CD8-positive, alpha-beta memory T cell (primary cell): ENCODE measurements at regions of chr12 and their contacts with region 1.

Region 1: DNA sequence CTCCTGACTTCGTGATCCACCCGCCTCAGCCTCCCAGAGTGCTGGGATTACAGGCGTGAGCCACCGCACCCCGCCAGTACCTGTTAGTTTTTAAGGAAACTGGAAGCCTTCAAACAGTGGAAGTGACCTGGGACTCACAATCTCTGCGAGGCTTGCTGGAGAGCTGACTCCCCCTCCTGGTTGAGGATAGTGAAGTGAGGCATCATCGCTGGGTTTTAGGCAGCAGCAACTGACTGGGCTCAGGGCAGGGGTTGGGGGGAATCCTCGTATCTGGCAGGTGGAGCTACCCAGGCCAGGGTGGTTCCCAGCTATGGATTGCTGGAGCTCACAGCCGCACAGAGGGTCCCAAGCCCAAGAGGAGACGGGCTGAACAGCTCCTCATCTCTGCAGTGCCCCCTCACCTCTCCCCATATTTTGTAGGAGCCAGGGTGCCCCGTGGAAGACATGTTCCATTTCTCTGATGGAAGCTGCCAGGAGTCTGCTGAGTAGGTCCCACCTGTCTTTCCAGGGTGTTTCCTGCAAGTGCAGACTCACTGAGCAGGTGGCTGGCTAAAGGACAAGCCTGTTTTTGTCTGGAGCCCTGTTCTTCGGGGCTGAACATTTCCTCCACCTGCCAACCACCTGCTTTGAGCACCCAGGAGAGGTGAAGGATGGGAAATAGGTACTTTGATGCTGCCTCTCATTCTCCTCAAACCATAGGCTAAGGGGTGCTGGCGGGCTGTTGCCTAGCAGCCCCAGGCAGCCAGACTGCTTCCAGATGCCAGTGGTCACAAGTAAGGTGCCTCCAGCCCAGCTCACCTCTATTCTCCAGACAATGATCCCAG is 3.1 kb downstream of the AVIL start:
- DNase-seq: no peak
- H3K4me3 ChIP-seq: no peak overlapping the region
- H3K4me3 Mint-ChIP-seq: no peak overlapping the region
- H3K27ac ChIP-seq: no peak overlapping the region
- H3K27ac Mint-ChIP-seq: peak overlapping the region in 1 of 8 donors; percentile 17
- H3K4me1 ChIP-seq: no peaks in the 10 kb centered on the region
- H3K4me1 Mint-ChIP-seq: peaks cover 3 to 8% (median 4%) of the 10 kb centered on the region in 3 donors
- H3K27me3 ChIP-seq: no peaks in the 10 kb centered on the region
- H3K27me3 Mint-ChIP-seq: no peaks in the 10 kb centered on the region

Region 2: DNA sequence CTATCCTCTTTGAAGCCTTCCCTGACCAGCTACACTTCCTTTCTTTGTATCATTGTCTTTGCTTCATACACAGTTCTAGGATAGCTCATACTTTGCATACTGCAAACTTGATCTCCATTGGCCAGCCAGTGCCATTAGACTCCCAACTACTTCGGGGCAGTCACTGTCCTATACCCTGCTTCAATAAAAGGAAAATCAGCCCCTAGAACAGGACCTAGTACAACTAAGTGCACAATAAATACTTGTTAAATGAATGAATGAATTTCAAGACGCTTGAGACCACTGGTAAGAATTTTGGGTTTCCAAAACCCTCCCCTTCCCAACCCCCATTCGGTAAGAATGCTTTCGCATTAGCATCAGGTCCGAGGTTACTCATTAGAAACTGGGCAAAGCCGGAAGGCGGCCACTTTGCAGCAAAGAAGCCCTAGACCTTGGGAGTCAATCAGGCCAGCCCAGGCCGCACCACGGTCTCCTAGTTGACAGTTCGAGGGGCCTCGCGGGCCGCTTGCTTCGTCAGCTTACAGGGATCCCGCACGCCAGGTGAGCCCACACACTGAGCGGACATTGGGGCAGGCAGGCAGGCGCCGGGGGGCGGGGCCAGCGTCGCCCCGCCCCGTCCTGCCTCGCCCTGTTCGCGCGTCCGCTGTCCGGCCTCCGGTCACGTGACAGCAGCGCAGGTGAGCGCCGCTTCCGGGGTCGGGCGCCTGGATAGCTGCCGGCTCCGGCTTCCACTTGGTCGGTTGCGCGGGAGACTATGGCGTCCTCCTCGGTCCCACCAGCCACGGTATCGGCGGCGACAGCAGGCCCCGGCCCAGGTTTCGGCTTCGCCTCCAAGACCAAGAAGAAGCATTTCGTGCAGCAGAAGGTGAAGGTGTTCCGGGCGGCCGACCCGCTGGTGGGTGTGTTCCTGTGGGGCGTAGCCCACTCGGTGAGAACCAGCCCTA is 224.6 kb before region 1 on chr12 and contains the start of gene PIP4K2C:
- CTCF ChIA-PET with region 1: no interaction called
- POLR2A ChIA-PET with region 1: interaction called, 12 read pairs
- DNase-seq: peak; percentile 70 to 86 (median 78)
- H3K4me3 ChIP-seq: peak within 1 kb of the TSS; percentile 84
- H3K4me3 Mint-ChIP-seq: peak within 1 kb of the TSS; percentile 85 to 91 (median 91)
- H3K27ac ChIP-seq: peak within 1 kb of the TSS; percentile 64
- H3K27ac Mint-ChIP-seq: peak within 1 kb of the TSS; percentile 76 to 98 (median 92)
- H3K4me1 ChIP-seq: peaks cover 26% of the 10 kb centered on the region
- H3K4me1 Mint-ChIP-seq: peaks cover 29 to 39% (median 38%) of the 10 kb centered on the region in 3 donors
- H3K27me3 ChIP-seq: no peaks in the 10 kb centered on the region
- H3K27me3 Mint-ChIP-seq: peaks cover 2 to 4% of the 10 kb centered on the region in 2 donors
- total RNA-seq, gene PIP4K2C: 24.7 to 29.7 TPM

Region 3: DNA sequence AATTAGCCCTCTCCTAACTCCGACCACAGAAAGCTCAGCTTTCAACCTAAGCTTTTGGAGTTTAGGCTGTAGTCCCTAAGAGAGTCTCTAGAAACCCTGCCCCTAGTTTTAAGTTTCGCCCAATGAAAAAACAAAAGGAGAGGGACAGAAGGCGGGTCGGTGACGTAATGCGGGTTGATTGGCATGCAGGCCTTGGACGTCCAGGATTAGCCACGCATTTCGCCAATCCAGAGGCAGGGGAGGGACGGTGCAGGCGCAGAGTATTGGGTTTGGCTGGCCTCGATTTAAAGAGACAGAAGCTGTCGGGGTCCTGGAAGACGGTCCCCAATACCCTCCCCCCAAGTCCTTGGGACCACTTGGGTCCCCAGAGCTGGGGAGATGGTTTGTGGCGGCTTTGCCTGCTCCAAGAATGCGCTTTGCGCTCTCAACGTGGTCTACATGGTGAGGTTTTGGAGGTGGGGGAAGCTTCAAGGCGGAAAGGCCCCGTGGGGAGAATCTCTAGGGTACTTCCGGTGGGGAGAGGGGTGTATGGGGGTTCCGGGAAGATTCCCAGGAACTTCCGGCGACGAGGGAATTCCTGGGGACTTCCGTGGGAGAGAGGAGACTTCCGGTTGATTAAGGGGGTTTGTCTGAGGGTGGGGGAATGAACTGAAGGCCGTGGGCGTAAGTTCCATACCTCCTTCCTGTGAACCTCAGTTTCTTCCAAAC is 70.5 kb before region 1 on chr12 and contains the start of gene TSPAN31:
- CTCF ChIA-PET with region 1: no interaction called
- POLR2A ChIA-PET with region 1: no interaction called
- DNase-seq: peak; percentile 92 to 96 (median 93)
- H3K4me3 ChIP-seq: peak within 1 kb of the TSS; percentile 74
- H3K4me3 Mint-ChIP-seq: peak within 1 kb of the TSS; percentile 85 to 96 (median 90)
- H3K27ac ChIP-seq: peak within 1 kb of the TSS; percentile 89
- H3K27ac Mint-ChIP-seq: peak within 1 kb of the TSS; percentile 84 to 99 (median 97)
- H3K4me1 ChIP-seq: peaks cover 44% of the 10 kb centered on the region
- H3K4me1 Mint-ChIP-seq: peaks cover 45 to 60% (median 51%) of the 10 kb centered on the region in 3 donors
- H3K27me3 ChIP-seq: no peaks in the 10 kb centered on the region
- H3K27me3 Mint-ChIP-seq: peaks cover 0 to 5% of the 10 kb centered on the region in 2 donors
- total RNA-seq, gene TSPAN31: 12.0 to 13.0 TPM

Region 4: GRCh38 chr12:57793920-57794319 is 21.5 kb before region 1 on chr12:
- CTCF ChIA-PET with region 1: no interaction called
- POLR2A ChIA-PET with region 1: no interaction called
- DNase-seq: no peak
- H3K4me3 ChIP-seq: no peak overlapping the region
- H3K4me3 Mint-ChIP-seq: no peak overlapping the region
- H3K27ac ChIP-seq: no peak overlapping the region
- H3K27ac Mint-ChIP-seq: peak overlapping the region in 1 of 8 donors; percentile 23
- H3K4me1 ChIP-seq: no peaks in the 10 kb centered on the region
- H3K4me1 Mint-ChIP-seq: peaks cover 0 to 6% (median 4%) of the 10 kb centered on the region in 3 donors
- H3K27me3 ChIP-seq: no peaks in the 10 kb centered on the region
- H3K27me3 Mint-ChIP-seq: no peaks in the 10 kb centered on the region